ENCODE measurements at regions of chr14 and their contacts with region 1.

Region 1: DNA sequence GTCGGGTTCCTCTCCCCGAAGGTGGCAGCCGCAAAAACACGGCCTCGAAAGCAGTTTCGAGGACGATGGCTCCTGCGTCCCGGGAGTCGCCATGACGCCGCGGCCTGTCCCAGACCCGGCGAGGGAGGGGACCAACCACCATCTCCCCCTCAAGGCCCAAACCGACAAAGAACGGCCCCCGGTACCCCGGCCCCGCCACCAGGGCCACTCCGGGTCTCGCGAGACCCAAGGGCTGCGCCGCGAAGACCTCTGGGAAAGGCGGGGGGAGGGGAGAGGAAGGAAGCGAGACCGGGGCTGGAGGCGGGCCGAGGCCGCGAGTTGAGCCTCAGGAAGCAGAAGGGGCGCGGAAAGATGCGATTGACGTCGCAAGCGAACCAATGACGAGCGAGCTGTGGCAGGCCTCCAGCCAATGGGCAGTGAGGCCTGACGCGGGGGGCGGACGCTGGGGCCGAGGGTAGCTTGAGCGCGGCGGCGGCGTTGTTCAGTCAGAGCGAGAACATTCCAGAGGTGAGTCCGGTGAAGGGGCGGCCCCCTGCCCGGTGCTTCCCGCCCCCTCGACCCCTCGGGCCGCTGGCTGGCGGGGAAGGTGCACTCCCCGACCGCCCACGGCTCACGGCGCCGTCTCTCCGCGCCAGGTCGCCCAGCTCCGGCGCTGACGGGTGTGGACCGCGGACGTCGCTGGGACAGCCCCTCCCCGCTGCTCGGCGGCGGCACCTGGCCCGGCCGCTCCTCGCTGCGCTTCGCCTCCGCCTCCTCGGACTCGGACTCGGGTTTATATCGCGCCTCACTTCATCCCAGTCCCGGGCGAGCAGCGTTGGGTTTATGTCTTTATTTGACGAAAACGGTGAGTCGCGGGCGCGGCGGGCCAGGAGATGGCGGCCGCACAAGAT is at the start of gene EIF5:
- DNase-seq: peak; percentile 98
- ATAC-seq: peak; percentile 86
- H3K4me3 ChIP-seq: peak within 1 kb of the TSS; percentile 95
- H3K27ac ChIP-seq: peak within 1 kb of the TSS; percentile 81
- H3K4me1 ChIP-seq: peaks cover 25% of the 10 kb centered on the region
- H3K27me3 ChIP-seq: no peaks in the 10 kb centered on the region
- CTCF ChIP-seq: no peak
- total RNA-seq, gene EIF5: 198 and 216 TPM in 2 replicates

Region 2: DNA sequence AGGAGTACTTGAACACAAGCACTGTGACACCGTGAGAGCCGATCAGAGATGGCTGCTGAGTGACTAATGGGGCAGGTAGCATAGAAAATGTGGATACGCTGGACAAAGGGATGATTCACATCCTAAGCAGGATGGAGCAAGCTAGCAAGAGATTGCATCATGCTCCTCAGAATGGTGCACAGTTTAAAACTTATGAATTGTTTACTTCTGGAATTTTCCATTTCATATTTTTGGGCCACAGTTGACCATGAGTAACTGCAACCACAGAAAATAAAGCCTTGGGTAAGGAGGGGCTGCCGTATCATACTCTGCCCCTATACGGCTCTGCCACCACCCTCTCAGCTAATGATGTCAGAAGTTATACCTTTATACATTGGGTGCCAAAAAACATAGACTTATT is 27.9 kb after region 1 on chr14:
- CTCF ChIA-PET with region 1: interaction called, 3 read pairs
- POLR2A ChIA-PET with region 1: no interaction called
- intact Hi-C with region 1: loop called (anchors 1 kb)
- DNase-seq: peak; percentile 97
- ATAC-seq: peak; percentile 98
- H3K4me3 ChIP-seq: no peak overlapping the region
- H3K27ac ChIP-seq: peak overlapping the region; percentile 90
- H3K4me1 ChIP-seq: peaks cover 16% of the 10 kb centered on the region
- H3K27me3 ChIP-seq: no peaks in the 10 kb centered on the region
- CTCF ChIP-seq: no peak

Region 3: GRCh38 chr14:103451401-103451800 is 117.4 kb after region 1 on chr14:
- CTCF ChIA-PET with region 1: no interaction called
- POLR2A ChIA-PET with region 1: interaction called, 13 read pairs
- intact Hi-C with region 1: no loop called
- DNase-seq: no peak
- ATAC-seq: no peak
- H3K4me3 ChIP-seq: no peak overlapping the region
- H3K27ac ChIP-seq: no peak overlapping the region
- H3K4me1 ChIP-seq: no peaks in the 10 kb centered on the region
- H3K27me3 ChIP-seq: no peaks in the 10 kb centered on the region
- CTCF ChIP-seq: no peak

Measured in PC-3 (cell line).